IMR-90 (cell line): ENCODE measurements at regions of chr10 and their contacts with region 1.

Region 1: DNA sequence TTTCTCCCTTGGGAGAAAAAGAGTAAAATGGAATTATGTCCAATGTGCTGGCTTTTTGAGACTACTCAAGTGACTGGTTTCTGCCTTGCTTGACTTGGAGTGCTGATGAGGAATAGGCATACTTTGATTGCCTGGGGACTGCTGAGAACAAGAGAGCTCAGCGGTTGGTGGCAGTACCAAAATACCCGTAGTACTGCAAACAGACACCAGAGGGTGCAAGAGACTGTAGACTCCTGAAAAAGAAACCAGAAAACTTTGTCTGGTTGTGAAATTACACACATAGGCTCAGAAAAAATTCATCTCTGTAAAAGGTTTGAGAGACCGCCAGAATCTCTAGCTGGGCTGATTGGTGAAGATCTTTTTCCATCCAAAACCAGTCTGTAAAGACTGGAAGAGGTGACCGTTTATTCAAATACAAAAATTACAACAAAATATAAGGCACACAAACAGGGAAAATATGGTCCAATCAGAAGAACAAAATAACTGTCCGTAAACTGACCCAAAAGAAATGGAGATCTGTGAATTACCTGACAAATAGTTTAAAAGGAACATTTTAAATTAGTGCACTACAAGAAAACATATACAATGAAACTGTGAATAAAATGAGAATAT is 18.5 kb downstream of the BICC1 start:
- DNase-seq: peak; percentile 76
- ATAC-seq: peak; percentile 87
- H3K4me3 ChIP-seq: no peak overlapping the region
- H3K27ac ChIP-seq: no peak overlapping the region
- H3K4me1 ChIP-seq: 0 out of 2 replicates have a peak, but pooled peaks cover 2% of the 10 kb centered on the region
- H3K27me3 ChIP-seq: no peaks in the 10 kb centered on the region
- CTCF ChIP-seq: peak; percentile 82
- POLR2A ChIP-seq: no peak
- RAD21 ChIP-seq: peak; percentile 91

Region 2: GRCh38 chr10:58486821-58487220 is 44.4 kb before region 1 on chr10:
- CTCF ChIA-PET with region 1: no interaction called
- POLR2A ChIA-PET with region 1: no interaction called
- dilution Hi-C with region 1: no loop called
- in situ Hi-C with region 1: no loop called
- intact Hi-C with region 1: no loop called
- DNase-seq: peak; percentile 29
- ATAC-seq: peak; percentile 40
- H3K4me3 ChIP-seq: no peak overlapping the region
- H3K27ac ChIP-seq: no peak overlapping the region
- H3K4me1 ChIP-seq: peaks cover 2% of the 10 kb centered on the region; the same call in 1 of the 2 replicates
- H3K27me3 ChIP-seq: no peaks in the 10 kb centered on the region
- CTCF ChIP-seq: no peak
- POLR2A ChIP-seq: no peak
- RAD21 ChIP-seq: no peak

Region 3: GRCh38 chr10:58502956-58503355 is 28.2 kb before region 1 on chr10:
- CTCF ChIA-PET with region 1: no interaction called
- POLR2A ChIA-PET with region 1: no interaction called
- dilution Hi-C with region 1: no loop called
- in situ Hi-C with region 1: no loop called
- intact Hi-C with region 1: no loop called
- DNase-seq: peak; percentile 59
- ATAC-seq: no peak; the same call in 1 of the 2 replicates
- H3K4me3 ChIP-seq: no peak overlapping the region
- H3K27ac ChIP-seq: no peak overlapping the region
- H3K4me1 ChIP-seq: peaks cover 2% of the 10 kb centered on the region; the same call in 1 of the 2 replicates
- H3K27me3 ChIP-seq: no peaks in the 10 kb centered on the region
- CTCF ChIP-seq: no peak
- POLR2A ChIP-seq: no peak
- RAD21 ChIP-seq: no peak

Region 4: DNA sequence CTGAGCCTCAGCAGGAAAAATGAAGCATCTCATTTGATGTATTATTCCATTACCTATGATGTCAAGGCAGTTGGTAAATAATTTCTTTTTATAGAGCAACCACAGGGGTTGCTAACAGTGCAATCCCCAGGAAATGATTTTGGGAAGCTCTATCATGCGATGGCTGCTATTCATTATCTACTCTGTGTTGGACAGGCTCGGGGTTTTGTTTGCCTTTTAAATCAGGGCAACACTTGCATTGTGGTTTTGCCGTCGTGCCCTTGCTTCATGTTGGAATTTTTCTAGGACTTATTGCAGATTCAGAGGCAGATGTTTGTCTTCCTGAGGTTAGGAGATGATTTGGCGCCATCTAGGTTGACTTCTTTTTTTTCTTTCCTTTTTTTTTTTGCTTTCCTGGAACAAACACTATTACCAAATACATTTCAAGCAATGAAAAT is 109.9 kb after region 1 on chr10:
- CTCF ChIA-PET with region 1: interaction called, 5 read pairs
- POLR2A ChIA-PET with region 1: no interaction called
- dilution Hi-C with region 1: no loop called
- in situ Hi-C with region 1: no loop called
- intact Hi-C with region 1: loop called (anchors 1 kb)
- DNase-seq: peak; percentile 92
- ATAC-seq: peak; percentile 76
- H3K4me3 ChIP-seq: no peak overlapping the region
- H3K27ac ChIP-seq: no peak overlapping the region
- H3K4me1 ChIP-seq: peaks cover 10% of the 10 kb centered on the region; the same call in 1 of the 2 replicates
- H3K27me3 ChIP-seq: no peaks in the 10 kb centered on the region
- CTCF ChIP-seq: peak; percentile 46
- POLR2A ChIP-seq: no peak
- RAD21 ChIP-seq: peak; percentile 42; the same call in 1 of the 2 replicates

Region 5: GRCh38 chr10:58775960-58776567 is 244.9 kb after region 1 on chr10:
- CTCF ChIA-PET with region 1: interaction called, 3 read pairs
- POLR2A ChIA-PET with region 1: no interaction called
- dilution Hi-C with region 1: no loop called
- in situ Hi-C with region 1: no loop called
- intact Hi-C with region 1: loop called (anchors 5 kb)
- DNase-seq: peak; percentile 86
- ATAC-seq: peak; percentile 87
- H3K4me3 ChIP-seq: no peak overlapping the region
- H3K27ac ChIP-seq: no peak overlapping the region
- H3K4me1 ChIP-seq: peaks cover 10% of the 10 kb centered on the region
- H3K27me3 ChIP-seq: no peaks in the 10 kb centered on the region
- CTCF ChIP-seq: no peak
- POLR2A ChIP-seq: no peak
- RAD21 ChIP-seq: peak; percentile 21

Region 6: DNA sequence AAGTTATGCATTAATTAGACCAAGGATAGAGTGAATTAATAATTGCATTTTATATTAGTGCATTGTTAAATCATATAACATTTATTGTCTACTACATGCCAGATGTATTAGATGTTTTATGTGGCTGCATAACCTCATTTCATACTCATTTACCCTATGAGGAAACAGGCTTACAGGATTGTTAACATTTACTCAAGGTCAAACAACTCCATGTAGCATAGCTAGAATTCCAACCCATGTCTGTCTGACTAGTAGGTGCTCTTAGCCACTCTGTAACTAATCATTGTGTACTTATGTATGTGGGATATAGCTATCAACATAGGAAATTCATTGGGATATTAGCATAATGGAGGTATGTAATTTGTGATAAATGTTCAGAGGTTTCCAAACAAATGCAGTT is 691.6 kb after region 1 on chr10:
- CTCF ChIA-PET with region 1: no interaction called
- POLR2A ChIA-PET with region 1: no interaction called
- dilution Hi-C with region 1: no loop called
- in situ Hi-C with region 1: loop called (anchors 25 kb)
- intact Hi-C with region 1: no loop called
- DNase-seq: peak; percentile 5
- ATAC-seq: no peak
- H3K4me3 ChIP-seq: no peak overlapping the region
- H3K27ac ChIP-seq: no peak overlapping the region
- H3K4me1 ChIP-seq: no peaks in the 10 kb centered on the region
- H3K27me3 ChIP-seq: no peaks in the 10 kb centered on the region
- CTCF ChIP-seq: no peak
- POLR2A ChIP-seq: no peak
- RAD21 ChIP-seq: no peak

Region 7: GRCh38 chr10:59234816-59235429 is 703.7 kb after region 1 on chr10:
- CTCF ChIA-PET with region 1: no interaction called
- POLR2A ChIA-PET with region 1: no interaction called
- dilution Hi-C with region 1: no loop called
- in situ Hi-C with region 1: no loop called
- intact Hi-C with region 1: loop called (anchors 5 kb)
- DNase-seq: peak; percentile 58
- ATAC-seq: peak; percentile 61; the same call in 1 of the 2 replicates
- H3K4me3 ChIP-seq: no peak overlapping the region
- H3K27ac ChIP-seq: no peak overlapping the region
- H3K4me1 ChIP-seq: no peaks in the 10 kb centered on the region
- H3K27me3 ChIP-seq: no peaks in the 10 kb centered on the region
- CTCF ChIP-seq: peak; percentile 62
- POLR2A ChIP-seq: no peak
- RAD21 ChIP-seq: peak; percentile 47

Region 8: DNA sequence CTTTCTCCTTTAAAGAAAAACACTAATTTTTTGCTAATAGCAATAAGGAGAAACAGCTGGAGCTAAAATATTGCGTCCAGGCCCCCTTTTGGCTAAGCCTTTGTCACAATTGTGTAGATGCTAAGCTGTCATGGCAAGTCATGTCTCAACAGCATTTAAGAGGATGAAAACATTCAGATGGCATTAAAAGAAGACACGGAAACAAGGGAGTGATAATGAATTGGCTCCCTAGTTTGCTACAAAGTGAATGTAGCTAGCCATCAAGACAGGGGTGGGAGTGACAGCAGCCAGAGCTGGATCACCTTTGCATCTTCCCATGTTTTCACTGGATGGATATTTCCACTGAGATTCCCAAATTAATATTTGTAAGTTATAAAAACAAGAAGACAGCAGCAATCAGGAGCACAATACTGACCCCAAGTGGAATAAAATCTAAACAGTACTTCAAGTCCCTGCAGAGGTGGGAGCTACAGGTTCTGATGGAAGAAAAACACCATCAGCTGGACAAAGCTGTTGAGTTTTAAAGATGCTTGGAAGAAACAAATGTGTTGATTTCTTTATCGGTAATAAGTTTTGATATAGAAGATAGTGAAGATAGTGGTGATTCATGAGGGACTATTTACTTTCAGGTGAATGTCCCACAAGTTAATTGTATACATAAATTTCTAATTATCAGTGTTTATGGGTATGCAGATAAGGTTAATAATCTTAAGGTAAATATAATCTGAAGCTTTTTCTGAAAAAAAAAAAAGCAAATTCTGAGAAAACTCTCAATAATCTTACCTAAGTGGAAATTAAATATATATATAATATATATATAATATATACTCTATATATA is 1049.1 kb after region 1 on chr10:
- CTCF ChIA-PET with region 1: no interaction called
- POLR2A ChIA-PET with region 1: no interaction called
- dilution Hi-C with region 1: no loop called
- in situ Hi-C with region 1: loop called (anchors 25 kb)
- intact Hi-C with region 1: no loop called
- DNase-seq: peak; percentile 58
- ATAC-seq: peak; percentile 51; the same call in 1 of the 2 replicates
- H3K4me3 ChIP-seq: no peak overlapping the region
- H3K27ac ChIP-seq: no peak overlapping the region
- H3K4me1 ChIP-seq: peaks cover 3% of the 10 kb centered on the region; the same call in 1 of the 2 replicates
- H3K27me3 ChIP-seq: peaks cover 2% of the 10 kb centered on the region; the same call in 1 of the 2 replicates
- CTCF ChIP-seq: peak; percentile 60
- POLR2A ChIP-seq: no peak
- RAD21 ChIP-seq: peak; percentile 65